Activated CD4-positive, alpha-beta T cell treated with anti-CD3 and anti-CD28 coated beads, Interleukin-2, amount 10 ng/mL, durations not matched to agents 24 days and 14 days (primary cell): ENCODE measurements at regions of chr15 and their contacts with region 1.

Region 1: DNA sequence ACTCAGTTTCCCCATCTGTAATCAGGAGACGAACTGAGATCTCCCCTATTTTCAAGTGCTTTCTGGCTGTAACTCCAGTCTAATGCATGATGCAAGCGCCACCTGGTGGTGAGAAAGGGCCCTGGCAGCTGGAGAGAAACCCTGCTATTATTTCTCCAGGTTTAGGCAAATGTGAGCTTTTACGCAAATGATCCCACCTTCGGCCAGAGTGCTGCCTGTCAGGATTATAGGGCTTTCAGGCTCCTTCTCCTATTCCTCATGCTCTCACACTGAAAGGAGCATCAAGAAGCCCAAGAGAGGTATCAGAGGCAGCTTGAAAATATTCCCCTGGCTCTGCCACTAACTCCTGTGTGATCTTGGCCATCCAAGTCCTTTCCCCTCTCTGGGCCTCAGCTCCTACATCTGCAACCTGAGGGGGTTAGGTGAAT is 93.9 kb upstream of the RASGRF1 start:
- DNase-seq: peak; percentile 89
- H3K4me3 Mint-ChIP-seq: no peak overlapping the region
- H3K27ac Mint-ChIP-seq: no peak overlapping the region
- H3K4me1 Mint-ChIP-seq: no peaks in the 10 kb centered on the region
- H3K27me3 Mint-ChIP-seq: peaks cover 5% of the 10 kb centered on the region

Region 2: DNA sequence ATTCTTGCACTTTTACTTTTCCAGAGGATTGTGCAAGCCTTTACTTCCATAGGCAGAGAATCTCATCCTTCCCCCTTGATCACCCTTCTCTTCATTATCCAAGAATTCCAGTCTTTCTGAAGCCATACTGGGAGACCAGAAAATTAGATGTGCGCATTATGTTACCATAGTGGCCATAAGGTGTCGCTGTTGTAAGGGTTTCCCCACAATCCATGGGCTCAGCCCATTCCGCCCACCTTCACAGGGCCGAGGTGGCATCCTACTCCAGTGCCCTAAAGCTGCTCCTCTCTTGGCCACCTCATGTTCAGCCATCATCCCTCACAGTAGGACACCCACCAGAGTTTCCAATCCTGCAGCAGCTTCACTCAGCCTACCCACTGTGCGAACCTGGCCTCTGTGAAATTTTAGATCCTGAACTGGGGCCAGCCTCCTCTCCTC is 274.7 kb before region 1 on chr15:
- intact Hi-C with region 1: loop called (anchors 2 kb)
- DNase-seq: peak; percentile 77
- H3K4me3 Mint-ChIP-seq: no peak overlapping the region
- H3K27ac Mint-ChIP-seq: peak overlapping the region; percentile 22
- H3K4me1 Mint-ChIP-seq: peaks cover 17% of the 10 kb centered on the region
- H3K27me3 Mint-ChIP-seq: no peaks in the 10 kb centered on the region

Region 3: DNA sequence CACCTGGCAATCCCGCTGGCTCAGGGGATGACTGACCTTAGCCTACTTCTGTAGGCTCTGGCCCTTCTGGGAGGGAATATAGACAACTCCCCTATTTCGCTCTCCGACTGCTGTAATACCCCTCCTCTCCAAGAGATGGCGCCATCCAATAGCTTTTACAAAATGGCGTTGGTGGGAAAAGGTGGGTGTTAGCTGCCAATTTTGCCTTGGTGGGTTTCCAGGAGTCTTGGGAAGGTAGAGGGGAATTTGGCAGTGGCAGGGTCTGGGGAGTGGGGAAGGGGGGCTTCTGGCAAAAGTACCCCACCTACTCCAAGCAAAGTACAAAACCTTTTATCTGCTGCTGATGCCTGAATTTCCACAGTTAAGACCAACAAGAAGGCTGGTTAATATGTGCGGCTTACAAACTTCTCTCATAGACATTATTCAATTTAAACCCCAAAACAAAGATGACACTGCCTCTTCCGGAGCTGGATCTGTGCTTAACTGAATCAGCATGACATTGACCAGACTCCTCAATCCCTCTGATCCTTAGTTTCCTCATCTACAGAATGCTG is 156.0 kb before region 1 on chr15:
- intact Hi-C with region 1: loop called (anchors 1 kb)
- DNase-seq: peak; percentile 77
- H3K4me3 Mint-ChIP-seq: no peak overlapping the region
- H3K27ac Mint-ChIP-seq: no peak overlapping the region
- H3K4me1 Mint-ChIP-seq: no peaks in the 10 kb centered on the region
- H3K27me3 Mint-ChIP-seq: peaks cover 4% of the 10 kb centered on the region

Region 4: GRCh38 chr15:79130535-79131130 is 53.8 kb before region 1 on chr15:
- intact Hi-C with region 1: no loop called
- DNase-seq: no peak
- H3K4me3 Mint-ChIP-seq: no peak overlapping the region
- H3K27ac Mint-ChIP-seq: no peak overlapping the region
- H3K4me1 Mint-ChIP-seq: no peaks in the 10 kb centered on the region
- H3K27me3 Mint-ChIP-seq: peaks cover 16% of the 10 kb centered on the region

Region 5: DNA sequence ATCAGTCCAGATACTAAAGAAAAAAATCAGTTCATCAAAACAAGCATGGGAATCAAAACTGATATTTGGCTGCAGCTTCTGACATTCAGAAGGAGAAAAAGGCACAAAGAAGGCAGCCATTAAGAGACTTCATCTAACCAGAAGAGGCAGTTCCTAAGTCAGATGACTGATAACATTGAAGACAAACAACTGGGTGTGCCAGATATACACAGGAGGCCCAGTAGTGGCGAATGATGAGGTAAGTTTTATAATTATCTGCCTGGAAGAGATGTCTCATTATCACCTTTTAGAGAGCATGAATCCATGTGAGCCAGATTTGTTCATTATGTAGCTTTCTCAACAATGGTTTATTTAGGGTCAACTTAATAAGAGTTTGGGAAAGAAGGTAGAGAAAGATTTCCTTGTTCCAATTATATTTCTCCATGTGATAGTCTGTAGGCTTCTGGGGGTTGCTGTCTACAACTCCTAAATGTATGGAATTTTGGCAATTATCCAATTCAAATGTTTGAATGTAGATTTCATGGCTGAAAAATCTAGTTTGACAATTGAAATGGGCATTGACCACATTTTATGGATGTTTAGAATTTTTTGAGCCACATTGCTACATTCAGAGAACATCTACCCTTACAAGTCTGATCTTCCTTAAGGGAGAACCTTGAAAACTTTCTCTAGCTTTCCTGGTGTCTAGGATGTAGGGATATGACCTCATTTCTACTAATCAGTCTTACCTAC is 43.5 kb before region 1 on chr15:
- intact Hi-C with region 1: no loop called
- DNase-seq: no peak
- H3K4me3 Mint-ChIP-seq: no peak overlapping the region
- H3K27ac Mint-ChIP-seq: no peak overlapping the region
- H3K4me1 Mint-ChIP-seq: no peaks in the 10 kb centered on the region
- H3K27me3 Mint-ChIP-seq: peaks cover 25% of the 10 kb centered on the region